ENCODE measurements at regions of chr19 and their contacts with region 1.

Region 1: DNA sequence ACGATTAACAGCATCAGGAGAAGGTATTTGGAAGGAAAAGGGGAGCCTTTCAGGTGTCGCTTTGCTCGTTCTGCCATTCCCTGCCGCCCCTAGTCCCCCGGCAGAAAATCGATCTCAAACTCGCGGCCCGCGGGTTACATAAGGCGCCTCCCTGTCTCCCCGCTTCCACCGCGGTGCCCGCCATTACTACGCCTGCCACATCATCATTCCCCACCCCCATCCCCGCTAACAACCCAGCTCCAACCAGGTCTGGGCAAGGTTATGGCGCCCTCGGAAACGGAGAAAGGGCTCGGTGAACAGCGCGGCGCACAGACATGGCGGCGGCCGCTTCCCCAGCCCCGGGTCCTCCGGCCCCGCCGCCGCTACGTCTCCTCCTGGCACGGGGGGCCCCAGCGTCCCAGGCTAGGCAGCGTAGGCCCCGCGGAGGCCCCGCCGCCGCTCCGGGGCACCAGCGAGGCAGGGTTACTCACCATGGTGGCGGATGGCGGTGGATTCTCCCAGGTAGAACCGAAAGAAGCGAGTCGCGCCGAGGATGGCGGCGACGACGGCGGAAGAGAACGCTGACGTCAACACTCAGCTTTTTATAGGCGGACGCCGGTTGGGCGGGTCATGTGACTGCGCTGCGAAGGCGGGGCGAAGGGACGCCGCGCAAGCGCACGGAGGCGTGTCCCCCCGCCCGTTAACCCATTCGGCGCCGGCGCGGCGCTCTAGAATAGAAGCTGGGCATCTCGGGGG is at the start of gene EEF2:
- DNase-seq: peak; percentile 86
- H3K4me3 ChIP-seq: peak within 1 kb of the TSS; percentile 63 to 98 (median 97)
- H3K27ac ChIP-seq: peak within 1 kb of the TSS; percentile 90
- H3K4me1 ChIP-seq: peaks cover 31% of the 10 kb centered on the region
- H3K27me3 ChIP-seq: no peaks in the 10 kb centered on the region
- CTCF ChIP-seq: no peak
- POLR2A ChIP-seq: peak; percentile 99
- total RNA-seq, gene EEF2: 2,318 and 2,351 TPM in 2 replicates

Region 2: DNA sequence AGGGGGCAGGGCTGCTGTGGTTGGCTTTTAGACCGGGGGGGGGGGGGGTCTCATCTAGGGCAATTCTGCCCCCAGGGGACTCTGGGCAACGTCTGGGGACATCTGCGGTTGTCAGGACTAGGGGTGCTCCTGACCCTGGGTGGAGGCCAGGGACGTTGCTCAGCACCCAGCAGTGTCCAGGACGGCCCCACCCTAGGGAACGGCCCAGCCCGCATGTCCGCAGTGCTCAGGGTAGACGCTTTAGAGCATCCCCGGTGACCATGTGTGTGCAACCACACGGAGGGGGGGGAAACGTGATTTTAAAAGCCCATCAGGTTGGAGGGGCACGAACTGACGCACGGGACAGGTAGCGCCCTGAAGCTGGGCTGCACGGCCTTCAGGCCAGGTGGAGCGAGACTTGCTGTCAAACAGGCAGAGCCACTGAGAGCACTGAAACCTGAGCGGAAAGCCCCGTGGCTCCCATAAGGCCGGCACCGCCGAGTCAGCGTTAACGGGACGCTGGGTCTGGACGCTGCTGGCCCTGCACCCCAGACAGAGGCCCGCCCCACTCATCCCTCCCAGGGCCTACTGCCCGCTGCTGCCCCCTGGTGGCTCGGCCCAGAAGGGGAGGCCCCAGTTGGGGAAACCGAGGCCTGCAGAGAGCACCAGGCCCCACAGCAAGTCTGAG is 366.8 kb before region 1 on chr19:
- CTCF ChIA-PET with region 1: no interaction called
- POLR2A ChIA-PET with region 1: no interaction called
- dilution Hi-C with region 1: no loop called
- intact Hi-C with region 1: no loop called
- DNase-seq: peak; percentile 38
- H3K4me3 ChIP-seq: no peak overlapping the region
- H3K27ac ChIP-seq: no peak overlapping the region
- H3K4me1 ChIP-seq: no peaks in the 10 kb centered on the region
- H3K27me3 ChIP-seq: no peaks in the 10 kb centered on the region
- CTCF ChIP-seq: peak; percentile 85 to 97
- POLR2A ChIP-seq: no peak

Region 3: DNA sequence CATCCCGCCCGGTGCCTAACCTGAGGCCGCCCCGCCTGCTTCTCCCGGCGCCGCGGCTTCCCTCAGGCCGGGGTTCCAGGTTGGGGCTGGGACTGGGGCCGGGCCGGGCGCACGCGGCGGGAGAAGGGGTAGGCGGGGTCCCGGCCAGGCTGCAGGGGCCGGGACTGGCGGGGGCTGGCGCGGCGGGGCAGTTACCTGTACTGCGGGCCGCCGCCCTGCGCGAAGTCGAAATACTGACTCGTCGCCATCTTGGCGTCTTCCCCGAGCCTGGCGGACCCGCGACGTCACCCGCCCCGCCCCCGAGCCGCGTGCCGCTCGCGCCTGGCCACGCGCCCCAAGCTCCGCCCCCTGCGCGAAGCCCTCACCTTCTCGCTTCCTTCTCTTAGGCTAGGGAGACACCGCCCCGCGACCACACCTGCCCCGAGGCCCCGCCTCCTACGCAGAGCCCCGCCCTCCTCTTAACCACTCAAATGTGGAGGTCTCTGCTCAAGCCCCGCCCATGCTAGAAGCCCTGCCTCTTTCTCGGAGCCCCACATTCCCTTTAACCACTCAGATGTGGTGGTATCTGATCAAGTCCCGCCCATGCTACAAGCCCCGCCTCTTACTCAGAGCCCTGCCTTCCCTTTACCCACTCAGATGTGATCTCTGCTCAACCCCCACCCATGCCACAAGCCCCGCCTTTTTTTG is 116.2 kb before region 1 on chr19 and contains the start of gene ZFR2:
- CTCF ChIA-PET with region 1: no interaction called
- POLR2A ChIA-PET with region 1: no interaction called
- dilution Hi-C with region 1: no loop called
- intact Hi-C with region 1: no loop called
- DNase-seq: no peak
- H3K4me3 ChIP-seq: no peak within 1 kb of the TSS
- H3K27ac ChIP-seq: no peak within 1 kb of the TSS
- H3K4me1 ChIP-seq: no peaks in the 10 kb centered on the region
- H3K27me3 ChIP-seq: peaks cover 15 to 19% of the 10 kb centered on the region in 2 experiments
- CTCF ChIP-seq: no peak
- POLR2A ChIP-seq: no peak
- total RNA-seq, gene ZFR2: not detected in 2 replicates

Region 4: GRCh38 chr19:3970808-3971598 is 14.1 kb before region 1 on chr19 and contains the start of gene DAPK3:
- CTCF ChIA-PET with region 1: interaction called, 34 read pairs
- POLR2A ChIA-PET with region 1: interaction called, 82 read pairs
- dilution Hi-C with region 1: no loop called
- intact Hi-C with region 1: loop called (anchors 1 kb)
- DNase-seq: peak; percentile 99
- H3K4me3 ChIP-seq: peak within 1 kb of the TSS; percentile 79 to 93 (median 86)
- H3K27ac ChIP-seq: peak within 1 kb of the TSS; percentile 92
- H3K4me1 ChIP-seq: peaks cover 23% of the 10 kb centered on the region
- H3K27me3 ChIP-seq: no peaks in the 10 kb centered on the region
- CTCF ChIP-seq: no peak
- POLR2A ChIP-seq: peak; percentile 83
- total RNA-seq, gene DAPK3: 157 and 170 TPM in 2 replicates

Region 5: GRCh38 chr19:4065430-4066175 is 80.5 kb after region 1 on chr19:
- CTCF ChIA-PET with region 1: no interaction called
- POLR2A ChIA-PET with region 1: no interaction called
- dilution Hi-C with region 1: no loop called
- intact Hi-C with region 1: loop called (anchors 5 kb)
- DNase-seq: peak; percentile 94
- H3K4me3 ChIP-seq: peak overlapping the region in 1 of 3 experiments; percentile 98
- H3K27ac ChIP-seq: no peak overlapping the region
- H3K4me1 ChIP-seq: peaks cover 11% of the 10 kb centered on the region
- H3K27me3 ChIP-seq: no peaks in the 10 kb centered on the region
- CTCF ChIP-seq: no peak
- POLR2A ChIP-seq: peak; percentile 11

Region 6: GRCh38 chr19:4199699-4200293 is 214.7 kb after region 1 on chr19:
- CTCF ChIA-PET with region 1: interaction called, 17 read pairs
- POLR2A ChIA-PET with region 1: interaction called, 4 read pairs
- dilution Hi-C with region 1: no loop called
- intact Hi-C with region 1: loop called (anchors 1 kb)
- DNase-seq: no peak
- H3K4me3 ChIP-seq: no peak overlapping the region
- H3K27ac ChIP-seq: no peak overlapping the region
- H3K4me1 ChIP-seq: no peaks in the 10 kb centered on the region
- H3K27me3 ChIP-seq: peaks cover 6 to 12% of the 10 kb centered on the region in 2 experiments
- CTCF ChIP-seq: no peak
- POLR2A ChIP-seq: no peak